Sciatic nerve (tissue), 2 donors: ENCODE measurements at regions of chrX and their contacts with region 1.

Region 1: DNA sequence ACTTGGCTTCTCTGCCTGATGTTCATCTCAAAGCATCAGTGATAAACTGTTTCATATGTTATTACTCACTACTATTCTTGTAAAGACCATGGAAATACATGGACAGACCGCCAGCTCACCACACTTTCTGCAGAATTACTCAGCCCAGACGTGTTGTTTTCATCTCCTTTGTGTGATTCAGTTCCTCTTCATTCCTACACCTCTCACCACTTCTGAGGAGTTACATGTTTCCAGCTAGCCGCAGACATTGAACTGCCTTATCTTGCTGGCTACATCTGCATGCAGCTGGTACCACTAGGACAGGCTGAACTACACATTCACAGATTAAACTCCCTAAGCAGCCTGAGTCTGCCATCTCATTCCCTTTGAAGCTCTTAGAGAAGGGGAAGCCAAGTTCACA is 443.2 kb upstream of the FGF16 start:
- DNase-seq: no peak
- ATAC-seq: no peak

Region 2: GRCh38 chrX:76657499-76657898 is 346.5 kb before region 1 on chrX:
- intact Hi-C with region 1: loop called (anchors 5 kb)
- DNase-seq: no peak
- ATAC-seq: no peak